H1 (cell line): ENCODE measurements at regions of chr11 and their contacts with region 1.

Region 1: DNA sequence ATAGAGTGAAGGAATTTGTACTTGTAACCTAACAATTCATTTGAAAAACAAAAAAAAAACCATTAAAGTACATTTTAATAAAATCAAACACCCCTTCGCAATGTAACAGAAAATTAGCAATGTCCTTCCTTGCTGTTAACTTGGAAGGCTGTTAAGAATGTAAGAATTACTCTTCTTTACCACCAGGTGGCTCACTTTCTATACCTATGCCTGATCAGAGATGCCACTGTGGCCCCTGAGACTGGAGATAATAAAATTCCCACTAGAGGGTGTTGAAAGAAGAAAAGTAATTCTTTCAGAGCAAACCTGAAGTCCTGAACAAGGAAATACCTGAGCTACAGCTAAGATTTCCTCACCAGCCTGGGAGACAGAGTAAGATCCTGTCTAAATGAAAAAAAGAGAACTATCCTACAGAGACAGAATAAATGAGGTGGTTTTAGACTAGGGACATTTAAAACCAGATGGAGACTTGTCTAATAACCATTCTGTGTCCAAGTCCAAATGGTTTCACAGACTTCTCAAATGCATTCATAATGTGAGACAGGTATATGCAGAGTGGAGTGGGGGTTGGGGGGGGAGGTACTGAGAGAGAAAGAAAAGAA is 1089.3 kb downstream of the FAM181B start:
- DNase-seq: no peak
- H3K4me3 ChIP-seq: no peak overlapping the region
- H3K27ac ChIP-seq: no peak overlapping the region
- H3K4me1 ChIP-seq: peaks cover 0 to 9% (median 5%) of the 10 kb centered on the region in 4 experiments; a peak in 6 of 7 replicates
- H3K27me3 ChIP-seq: peaks cover 5 to 32% (median 21%) of the 10 kb centered on the region in 4 experiments
- CTCF ChIP-seq: peak in 2 of 3 experiments; percentile 74 to 95; a peak in 3 of 4 replicates
- EP300 ChIP-seq: no peak
- POLR2A ChIP-seq: no peak
- RAD21 ChIP-seq: peak; percentile 79 to 81

Region 2: GRCh38 chr11:81658722-81659121 is 14.4 kb after region 1 on chr11:
- CTCF ChIA-PET with region 1: interaction called, 19 read pairs
- POLR2A ChIA-PET with region 1: no interaction called
- DNase-seq: no peak
- H3K4me3 ChIP-seq: no peak overlapping the region
- H3K27ac ChIP-seq: no peak overlapping the region
- H3K4me1 ChIP-seq: no peaks in the 10 kb centered on the region
- H3K27me3 ChIP-seq: no peaks in the 10 kb centered on the region
- CTCF ChIP-seq: peak; percentile 19 to 71 (median 39); a peak in 3 of 4 replicates
- EP300 ChIP-seq: no peak
- POLR2A ChIP-seq: no peak
- RAD21 ChIP-seq: peak; percentile 68

Region 3: DNA sequence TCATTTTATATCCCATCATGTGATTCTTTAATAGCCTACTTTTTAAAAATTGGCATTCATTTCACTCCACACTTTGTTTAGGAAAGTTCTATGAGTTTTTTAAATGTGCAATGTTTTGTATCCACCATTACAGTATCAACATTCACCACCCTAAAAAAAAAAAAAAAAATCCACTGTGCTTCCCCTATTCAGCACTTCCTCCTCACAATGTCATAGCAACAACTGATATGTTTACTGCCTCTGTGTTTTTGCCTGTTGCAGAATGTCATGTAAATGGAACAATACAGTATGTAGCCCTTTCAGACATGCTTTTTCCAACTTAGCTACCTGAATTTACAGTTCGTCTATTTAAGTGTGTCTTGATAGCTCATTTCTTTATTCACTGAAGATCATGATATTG is 335.1 kb after region 1 on chr11:
- CTCF ChIA-PET with region 1: no interaction called
- POLR2A ChIA-PET with region 1: no interaction called
- DNase-seq: no peak
- H3K4me3 ChIP-seq: no peak overlapping the region
- H3K27ac ChIP-seq: no peak overlapping the region
- H3K4me1 ChIP-seq: no peaks in the 10 kb centered on the region
- H3K27me3 ChIP-seq: no peaks in the 10 kb centered on the region
- CTCF ChIP-seq: no peak
- EP300 ChIP-seq: no peak
- POLR2A ChIP-seq: no peak
- RAD21 ChIP-seq: no peak